ENCODE measurements at regions of chr20 and their contacts with region 1.

Region 1: DNA sequence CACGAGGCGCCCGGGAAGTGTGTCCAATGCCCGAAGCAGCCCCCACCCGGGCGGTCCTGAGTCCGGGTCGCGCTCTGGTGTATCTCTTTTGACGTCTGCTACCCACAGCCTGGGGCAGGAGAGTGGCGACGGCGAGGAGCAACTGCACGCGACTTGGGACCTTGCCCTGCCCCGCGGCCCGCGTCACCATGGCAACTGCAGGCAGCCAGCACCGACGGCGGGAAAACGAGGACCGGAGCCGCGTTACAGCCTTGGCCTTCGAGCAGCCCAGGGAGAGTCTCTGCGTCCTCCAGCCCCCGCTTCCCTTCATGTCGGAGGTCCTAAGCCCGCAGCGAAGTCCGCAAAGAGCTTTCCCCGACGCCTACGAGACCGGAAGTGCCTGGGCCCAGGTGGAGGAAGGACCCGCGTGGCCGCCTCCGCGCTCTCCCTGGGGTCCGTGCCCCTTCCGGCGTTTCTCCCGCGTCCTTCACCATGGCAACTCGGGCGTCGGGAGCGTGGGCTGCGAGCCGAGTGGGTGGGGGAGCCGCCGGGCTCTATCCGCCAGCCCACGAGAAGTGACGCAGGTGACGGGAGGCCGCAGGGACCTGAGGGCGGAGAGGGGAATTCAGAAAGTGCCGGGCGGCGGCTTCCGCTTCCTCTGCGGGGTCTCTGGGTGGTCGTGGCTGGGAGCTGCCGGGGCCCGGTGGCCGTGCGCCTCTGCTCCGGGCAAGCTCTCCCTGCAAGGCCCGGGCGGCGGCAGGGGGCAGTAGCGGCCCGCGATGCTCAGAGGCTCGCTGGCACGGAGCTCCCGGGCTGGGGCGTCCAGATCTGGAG is 88.6 kb upstream of the TGM3 start:
- DNase-seq: peak; percentile 28
- ATAC-seq: peak; percentile 97
- H3K4me3 ChIP-seq: peak overlapping the region; percentile 37
- H3K27ac ChIP-seq: no peak overlapping the region
- H3K4me1 ChIP-seq: no peaks in the 10 kb centered on the region
- H3K27me3 ChIP-seq: peaks cover 21% of the 10 kb centered on the region
- CTCF ChIP-seq: peak; percentile 76
- POLR2A ChIP-seq: no peak
- RAD21 ChIP-seq: peak; percentile 79

Region 2: DNA sequence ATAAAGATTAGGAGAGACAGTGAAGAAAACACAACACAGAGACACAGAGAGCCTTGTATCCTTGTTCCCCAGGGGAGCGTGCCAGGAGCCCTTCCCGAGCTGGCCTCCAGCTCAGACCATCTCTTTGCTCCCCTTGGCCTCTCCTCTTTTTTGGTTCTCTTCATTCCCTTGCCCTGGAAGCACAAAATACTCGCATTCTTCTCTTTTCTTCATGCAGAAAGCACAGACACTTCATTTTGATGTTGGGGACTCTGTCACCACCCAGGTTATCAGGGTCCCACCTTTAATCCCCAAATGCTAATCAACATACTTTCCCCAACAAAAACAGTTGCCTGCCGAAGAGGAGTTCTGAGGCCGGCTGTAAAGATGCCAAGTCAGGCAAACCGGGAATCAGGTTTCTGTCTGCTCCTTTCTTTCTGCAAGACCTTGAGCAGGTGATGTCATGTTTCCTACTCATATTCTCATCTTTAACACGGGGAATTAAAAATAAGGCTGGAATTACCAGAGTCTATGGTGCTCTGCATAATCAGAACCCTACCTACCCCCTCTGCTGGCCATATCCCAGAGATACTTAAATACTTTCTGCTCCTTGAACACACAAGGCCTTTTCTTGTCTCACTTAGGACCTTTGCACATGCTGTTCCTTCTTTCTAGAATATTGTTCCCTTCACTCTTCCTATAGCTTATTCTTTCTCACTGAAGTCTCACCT is 195.3 kb after region 1 on chr20:
- CTCF ChIA-PET with region 1: no interaction called
- POLR2A ChIA-PET with region 1: no interaction called
- dilution Hi-C with region 1: no loop called
- in situ Hi-C with region 1: no loop called
- intact Hi-C with region 1: loop called (anchors 2 kb)
- DNase-seq: peak; percentile 51
- ATAC-seq: peak; percentile 70
- H3K4me3 ChIP-seq: no peak overlapping the region
- H3K27ac ChIP-seq: no peak overlapping the region
- H3K4me1 ChIP-seq: no peaks in the 10 kb centered on the region
- H3K27me3 ChIP-seq: no peaks in the 10 kb centered on the region; the same call in 1 of the 2 replicates
- CTCF ChIP-seq: peak; percentile 44
- POLR2A ChIP-seq: no peak
- RAD21 ChIP-seq: peak; percentile 34

Region 3: GRCh38 chr20:2421247-2421646 is 214.1 kb after region 1 on chr20:
- CTCF ChIA-PET with region 1: no interaction called
- POLR2A ChIA-PET with region 1: no interaction called
- dilution Hi-C with region 1: no loop called
- in situ Hi-C with region 1: no loop called
- intact Hi-C with region 1: no loop called
- DNase-seq: no peak
- ATAC-seq: no peak
- H3K4me3 ChIP-seq: no peak overlapping the region
- H3K27ac ChIP-seq: no peak overlapping the region
- H3K4me1 ChIP-seq: no peaks in the 10 kb centered on the region
- H3K27me3 ChIP-seq: peaks cover 2% of the 10 kb centered on the region
- CTCF ChIP-seq: 0 out of 2 replicates have a peak, but pooled peaks have one; percentile 11
- POLR2A ChIP-seq: no peak
- RAD21 ChIP-seq: no peak

Region 4: GRCh38 chr20:2651772-2652723 is 444.9 kb after region 1 on chr20 and contains the start of gene NOP56:
- CTCF ChIA-PET with region 1: no interaction called
- POLR2A ChIA-PET with region 1: no interaction called
- dilution Hi-C with region 1: no loop called
- in situ Hi-C with region 1: no loop called
- intact Hi-C with region 1: loop called (anchors 5 kb)
- DNase-seq: peak; percentile 86
- ATAC-seq: peak; percentile 96
- H3K4me3 ChIP-seq: peak within 1 kb of the TSS; percentile 90
- H3K27ac ChIP-seq: peak within 1 kb of the TSS; percentile 86
- H3K4me1 ChIP-seq: peaks cover 5% of the 10 kb centered on the region
- H3K27me3 ChIP-seq: no peaks in the 10 kb centered on the region
- CTCF ChIP-seq: no peak
- POLR2A ChIP-seq: peak; percentile 96
- RAD21 ChIP-seq: no peak
- total RNA-seq, gene NOP56: 170 and 231 TPM in 2 replicates